GM10248 (cell line): ENCODE measurements at regions of chr17 and their contacts with region 1.

Region 1: DNA sequence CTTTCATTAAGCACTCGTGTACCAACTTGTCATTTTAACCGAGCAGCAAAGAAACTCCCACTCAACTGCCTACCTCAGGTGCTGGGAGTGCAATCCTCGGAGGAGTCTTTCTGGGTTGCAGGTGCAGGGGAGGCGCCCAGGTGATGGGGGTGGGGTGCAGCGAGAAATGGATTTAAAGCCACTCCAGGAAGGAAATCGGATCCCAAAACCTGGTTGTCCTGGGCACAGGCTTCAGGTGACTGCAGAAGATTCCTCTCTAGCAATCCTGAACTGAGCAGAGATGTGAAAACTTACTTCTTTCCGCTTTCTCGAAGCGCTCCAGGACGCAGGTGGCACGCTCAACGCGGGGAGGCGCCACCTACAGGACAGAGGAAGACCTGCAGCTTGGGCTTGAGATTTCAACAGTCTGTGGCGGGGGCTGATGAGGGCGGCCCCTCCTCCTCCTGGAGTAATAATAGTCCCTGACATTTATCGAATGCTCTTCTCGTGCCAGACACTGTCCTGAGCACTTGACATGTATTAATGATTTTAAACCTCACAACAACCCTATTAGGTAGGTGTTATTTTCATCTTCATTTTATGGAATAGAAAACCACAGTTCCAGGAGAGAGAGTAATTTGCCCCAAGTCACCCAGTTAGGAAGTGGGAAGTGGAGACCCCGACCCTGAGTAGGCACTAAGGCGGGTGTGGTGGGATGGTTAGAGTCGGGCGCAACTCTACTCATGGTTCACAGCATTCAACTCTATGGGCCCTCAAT is 27.2 kb upstream of the SKAP1 start:
- DNase-seq: peak; percentile 68
- CTCF ChIP-seq: peak; percentile 96

Region 2: DNA sequence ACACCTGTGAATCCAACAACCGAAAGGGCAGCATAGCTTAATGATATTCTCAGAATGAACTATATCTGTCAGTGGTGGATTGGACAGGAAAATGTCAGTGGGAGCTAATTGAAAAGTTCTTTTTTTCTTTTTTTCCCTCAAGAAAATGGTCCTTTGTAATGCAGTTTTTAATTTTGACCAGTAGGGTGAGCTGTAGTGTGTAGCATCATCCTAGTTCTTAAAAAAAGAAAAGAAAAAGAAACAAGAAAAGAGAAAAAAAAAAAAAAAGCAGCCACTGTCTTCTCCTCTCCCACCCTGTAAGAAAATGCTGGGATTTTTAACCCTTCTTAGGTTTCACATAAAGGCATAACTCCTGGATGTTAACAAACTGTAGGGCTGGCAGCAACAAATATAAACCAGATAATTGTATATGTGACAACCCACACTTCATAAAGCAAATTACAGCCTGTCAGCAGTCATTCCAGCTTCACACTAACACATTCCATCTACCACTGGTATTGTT is 105.4 kb before region 1 on chr17:
- CTCF ChIA-PET with region 1: interaction called, 15 read pairs
- POLR2A ChIA-PET with region 1: no interaction called
- DNase-seq: peak; percentile 36
- CTCF ChIP-seq: peak; percentile 62

Region 3: GRCh38 chr17:48429638-48430586 is 27.3 kb before region 1 on chr17 and contains the start of gene SKAP1:
- CTCF ChIA-PET with region 1: interaction called, 11 read pairs
- POLR2A ChIA-PET with region 1: no interaction called
- DNase-seq: peak; percentile 78
- CTCF ChIP-seq: no peak

Region 4: GRCh38 chr17:48441231-48441711 is 16.0 kb before region 1 on chr17:
- CTCF ChIA-PET with region 1: interaction called, 72 read pairs
- POLR2A ChIA-PET with region 1: no interaction called
- DNase-seq: peak; percentile 71
- CTCF ChIP-seq: no peak

Region 5: DNA sequence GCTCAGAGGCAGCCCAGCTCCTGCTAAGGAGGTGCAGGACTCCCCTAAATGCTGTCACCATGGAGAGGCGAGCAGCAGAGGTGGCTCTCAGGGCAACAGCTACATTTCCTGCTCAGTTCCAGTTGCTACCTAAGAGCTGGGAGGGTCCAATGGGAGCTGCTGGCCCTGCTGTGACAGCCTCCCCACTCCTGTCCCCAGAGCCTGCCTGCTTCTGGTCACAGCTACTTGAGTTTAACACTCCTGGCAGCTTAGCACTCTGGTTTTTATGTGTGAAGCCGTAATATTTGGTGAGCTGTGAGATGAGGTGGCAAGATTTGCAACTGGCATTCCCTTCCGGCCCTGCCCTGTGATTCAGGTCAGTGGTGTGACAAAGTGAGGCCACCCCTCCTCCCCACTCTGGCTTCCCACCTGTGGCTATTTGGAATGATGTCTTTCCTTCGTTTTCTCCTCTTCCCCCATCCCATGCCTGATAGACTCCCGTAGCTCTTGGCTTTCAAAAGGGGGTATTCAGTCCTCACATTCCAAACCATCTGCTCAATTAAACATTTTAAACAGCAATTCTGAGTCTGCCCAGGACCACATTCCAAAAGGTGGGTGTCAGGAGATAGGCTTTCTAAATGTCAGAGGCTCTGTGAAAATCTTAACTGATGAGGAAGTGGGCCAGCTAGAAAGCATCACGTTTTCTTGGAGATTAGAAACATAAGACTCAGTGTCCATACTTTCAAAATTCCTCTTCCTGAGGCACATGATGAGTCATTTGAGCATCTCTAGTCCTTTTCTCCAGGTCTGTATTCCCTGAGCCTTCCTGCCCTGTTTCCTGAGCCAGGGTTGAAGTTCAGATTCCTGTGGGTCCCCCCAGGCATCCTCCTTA is 15.4 kb after region 1 on chr17:
- CTCF ChIA-PET with region 1: interaction called, 16 read pairs
- POLR2A ChIA-PET with region 1: no interaction called
- DNase-seq: no peak
- CTCF ChIP-seq: no peak

Region 6: GRCh38 chr17:48555258-48556228 is 98.3 kb after region 1 on chr17:
- CTCF ChIA-PET with region 1: no interaction called
- POLR2A ChIA-PET with region 1: no interaction called
- DNase-seq: no peak
- CTCF ChIP-seq: no peak